Activated CD4-positive, alpha-beta T cell treated with anti-CD3 and anti-CD28 coated beads, Interleukin-2, amount 10 ng/mL, durations not matched to agents 24 days and 14 days (primary cell): ENCODE measurements at regions of chr19 and their contacts with region 1.

Region 1: DNA sequence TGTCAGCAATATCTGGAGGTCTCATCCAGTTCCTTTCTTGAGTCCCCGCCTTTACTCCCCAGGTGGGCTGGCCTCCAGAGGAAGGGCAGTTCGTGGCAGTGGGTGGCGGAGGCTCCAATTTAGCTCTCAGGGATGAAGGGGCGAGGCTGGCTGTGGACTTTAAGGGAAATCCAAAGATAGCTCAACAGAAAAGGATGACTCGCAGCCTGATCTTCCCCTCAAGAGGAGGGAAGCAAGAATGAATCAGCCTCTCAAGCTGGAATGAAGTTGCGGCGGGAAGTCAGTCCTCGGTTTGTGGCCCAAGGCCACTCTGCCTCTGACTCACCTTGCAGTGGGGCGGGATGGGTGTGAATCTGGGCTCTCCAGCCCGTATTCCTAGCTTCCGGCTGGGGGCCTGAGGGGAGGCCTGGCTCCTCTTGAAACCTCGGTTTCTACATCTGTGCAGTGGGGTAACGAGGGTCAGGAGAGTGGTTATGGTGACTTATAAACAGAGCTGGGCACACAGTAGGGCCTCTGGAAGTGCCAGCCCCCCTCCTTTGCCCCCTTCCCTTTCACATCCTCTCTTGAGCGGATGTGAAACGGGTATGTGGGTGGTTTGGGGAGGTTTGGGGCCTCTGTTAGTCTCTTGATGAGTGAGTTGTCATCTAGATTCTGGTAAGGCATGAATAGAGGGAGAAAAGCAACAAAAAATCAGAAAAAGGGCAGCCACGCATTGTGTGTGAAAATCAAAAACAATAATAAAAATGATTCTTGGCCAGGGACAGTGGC is 10.5 kb upstream of the SMG9 start:
- DNase-seq: peak; percentile 93
- H3K4me3 Mint-ChIP-seq: peak overlapping the region; percentile 71
- H3K27ac Mint-ChIP-seq: peak overlapping the region; percentile 88
- H3K4me1 Mint-ChIP-seq: peaks cover 87% of the 10 kb centered on the region
- H3K27me3 Mint-ChIP-seq: no peaks in the 10 kb centered on the region

Region 2: DNA sequence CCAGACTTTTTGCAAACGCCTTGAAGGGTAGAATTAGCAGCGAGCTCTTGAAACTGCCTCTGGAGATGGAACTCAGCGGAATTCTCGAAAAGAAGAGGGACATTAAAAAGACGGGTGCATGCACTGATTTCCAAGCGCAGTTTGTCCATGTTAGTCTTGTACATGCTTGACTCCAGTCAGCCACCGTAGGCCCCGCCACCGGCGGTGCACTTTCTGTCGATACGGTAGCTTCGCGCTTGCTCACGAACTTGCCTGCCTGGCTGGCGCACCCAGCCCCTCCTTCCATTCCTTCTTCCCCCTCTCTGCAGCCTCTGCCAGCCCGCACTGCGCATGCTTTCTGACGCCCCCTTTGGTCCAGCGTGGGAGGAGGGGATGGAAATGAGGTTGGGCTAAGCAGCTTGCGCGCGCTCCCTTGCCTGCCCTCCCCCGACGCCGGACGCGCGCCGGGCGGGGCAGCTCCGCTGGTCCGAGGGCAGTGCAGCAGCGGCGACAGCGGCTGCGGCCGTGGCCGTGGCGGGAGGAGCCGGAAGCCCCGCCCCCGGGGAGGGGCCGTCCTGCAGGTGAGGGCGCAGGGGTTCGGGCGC is 232.2 kb before region 1 on chr19 and contains the start of gene ZNF575:
- intact Hi-C with region 1: loop called (anchors 5 kb)
- DNase-seq: peak; percentile 95
- H3K4me3 Mint-ChIP-seq: peak within 1 kb of the TSS; percentile 83
- H3K27ac Mint-ChIP-seq: peak within 1 kb of the TSS; percentile 95
- H3K4me1 Mint-ChIP-seq: peaks cover 20% of the 10 kb centered on the region
- H3K27me3 Mint-ChIP-seq: no peaks in the 10 kb centered on the region
- total RNA-seq, gene ZNF575: 1.8 and 2.4 TPM in 2 replicates

Region 3: GRCh38 chr19:43754503-43755255 is 10.6 kb before region 1 on chr19 and contains the start of gene SMG9:
- intact Hi-C with region 1: loop called (anchors 1 kb)
- DNase-seq: peak; percentile 100
- H3K4me3 Mint-ChIP-seq: peak within 1 kb of the TSS; percentile 94
- H3K27ac Mint-ChIP-seq: peak within 1 kb of the TSS; percentile 100
- H3K4me1 Mint-ChIP-seq: peaks cover 68% of the 10 kb centered on the region
- H3K27me3 Mint-ChIP-seq: no peaks in the 10 kb centered on the region
- total RNA-seq, gene SMG9: 83.9 and 86.6 TPM in 2 replicates

Region 4: DNA sequence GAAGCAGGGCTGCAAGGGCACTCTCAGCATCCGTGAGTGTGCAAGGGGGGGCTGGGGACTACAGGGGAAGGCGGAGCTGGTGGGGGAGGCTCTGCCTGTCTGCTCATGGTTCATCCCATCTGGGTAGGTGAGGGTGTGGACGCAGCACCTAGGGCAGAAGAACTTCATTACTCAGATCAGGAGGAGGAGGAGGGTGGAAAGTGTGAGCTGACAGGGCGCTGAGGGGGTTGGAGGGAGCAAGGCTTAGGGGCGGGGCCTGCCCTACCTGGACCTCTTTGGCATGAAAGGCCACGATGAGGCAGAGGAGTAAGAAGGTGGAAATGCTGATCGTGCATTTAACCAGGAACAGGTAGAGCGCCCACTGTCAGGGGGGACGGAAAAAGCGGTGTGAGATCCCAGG is 11.0 kb after region 1 on chr19:
- intact Hi-C with region 1: loop called (anchors 1 kb)
- DNase-seq: peak; percentile 70
- H3K4me3 Mint-ChIP-seq: peak overlapping the region; percentile 85
- H3K27ac Mint-ChIP-seq: peak overlapping the region; percentile 87
- H3K4me1 Mint-ChIP-seq: peaks cover 48% of the 10 kb centered on the region
- H3K27me3 Mint-ChIP-seq: no peaks in the 10 kb centered on the region

Region 5: GRCh38 chr19:43784981-43785808 is 19.9 kb after region 1 on chr19:
- intact Hi-C with region 1: loop called (anchors 1 kb)
- DNase-seq: peak; percentile 89
- H3K4me3 Mint-ChIP-seq: peak overlapping the region; percentile 75
- H3K27ac Mint-ChIP-seq: peak overlapping the region; percentile 92
- H3K4me1 Mint-ChIP-seq: peaks cover 39% of the 10 kb centered on the region
- H3K27me3 Mint-ChIP-seq: peaks cover 4% of the 10 kb centered on the region

Region 6: DNA sequence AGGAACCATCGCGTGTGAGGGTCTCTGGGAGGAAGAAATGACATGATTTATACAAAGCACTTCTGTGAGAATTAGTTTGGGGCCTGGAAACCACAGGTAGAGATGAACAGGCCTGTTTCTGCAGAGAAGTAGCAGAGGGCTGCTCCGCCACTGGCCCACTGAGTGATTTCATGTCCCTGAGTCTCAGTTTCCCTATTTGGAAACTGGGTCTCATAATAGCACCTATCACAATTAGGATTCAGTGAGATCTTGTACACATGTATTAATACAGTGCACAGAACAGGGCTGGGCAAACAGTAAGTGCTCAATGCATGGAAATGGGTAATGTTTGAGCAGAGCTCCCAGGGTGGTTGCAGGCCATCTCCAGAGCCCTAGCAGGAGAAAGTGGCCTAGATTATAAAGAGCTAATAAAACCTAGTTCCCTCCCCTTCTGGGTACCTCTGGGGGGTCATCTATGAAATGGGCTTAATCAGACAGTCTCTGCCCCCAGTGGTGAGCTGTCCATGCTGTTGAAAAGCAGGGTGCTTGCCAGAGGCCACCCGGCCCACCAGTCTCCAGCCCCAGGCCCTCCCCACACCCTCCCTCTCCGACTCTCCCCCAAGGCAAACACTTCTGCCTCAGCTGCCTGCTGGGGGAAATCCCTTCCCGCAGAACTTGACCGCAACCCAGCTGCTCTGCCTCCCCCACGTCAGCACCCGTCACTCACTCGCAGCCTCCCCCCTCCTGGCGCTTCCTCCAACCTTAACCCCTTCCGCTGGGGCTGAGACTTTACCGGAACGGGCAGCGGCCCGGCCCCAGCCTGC is 987.7 kb after region 1 on chr19:
- intact Hi-C with region 1: loop called (anchors 10 kb)
- DNase-seq: peak; percentile 99
- H3K4me3 Mint-ChIP-seq: peak overlapping the region; percentile 95
- H3K27ac Mint-ChIP-seq: peak overlapping the region; percentile 84
- H3K4me1 Mint-ChIP-seq: peaks cover 62% of the 10 kb centered on the region
- H3K27me3 Mint-ChIP-seq: peaks cover 2% of the 10 kb centered on the region

Region 7: GRCh38 chr19:45079063-45079910 is 1314.0 kb after region 1 on chr19 and contains the start of gene GEMIN7:
- intact Hi-C with region 1: loop called (anchors 5 kb)
- DNase-seq: peak; percentile 95
- H3K4me3 Mint-ChIP-seq: peak within 1 kb of the TSS; percentile 100
- H3K27ac Mint-ChIP-seq: peak within 1 kb of the TSS; percentile 94
- H3K4me1 Mint-ChIP-seq: peaks cover 31% of the 10 kb centered on the region
- H3K27me3 Mint-ChIP-seq: no peaks in the 10 kb centered on the region
- total RNA-seq, gene GEMIN7: 51.5 and 54.3 TPM in 2 replicates